CD8-positive, alpha-beta memory T cell (primary cell): ENCODE measurements at regions of chr17 and their contacts with region 1.

Region 1: GRCh38 chr17:80986816-80987475 is 4.7 kb upstream of the CHMP6 start:
- DNase-seq: no peak
- H3K4me3 ChIP-seq: no peak overlapping the region
- H3K4me3 Mint-ChIP-seq: no peak overlapping the region
- H3K27ac ChIP-seq: no peak overlapping the region
- H3K27ac Mint-ChIP-seq: peak overlapping the region in 1 of 8 donors; percentile 50
- H3K4me1 ChIP-seq: peaks cover 20% of the 10 kb centered on the region
- H3K4me1 Mint-ChIP-seq: peaks cover 7 to 23% (median 11%) of the 10 kb centered on the region in 3 donors
- H3K27me3 ChIP-seq: no peaks in the 10 kb centered on the region
- H3K27me3 Mint-ChIP-seq: peaks cover 4 to 8% of the 10 kb centered on the region in 2 donors

Region 2: GRCh38 chr17:80997424-80997841 is 10.5 kb after region 1 on chr17:
- CTCF ChIA-PET with region 1: no interaction called
- POLR2A ChIA-PET with region 1: no interaction called
- DNase-seq: no peak
- H3K4me3 ChIP-seq: no peak overlapping the region
- H3K4me3 Mint-ChIP-seq: peak overlapping the region in 1 of 7 donors; percentile 72
- H3K27ac ChIP-seq: no peak overlapping the region
- H3K27ac Mint-ChIP-seq: no peak overlapping the region
- H3K4me1 ChIP-seq: peaks cover 13% of the 10 kb centered on the region
- H3K4me1 Mint-ChIP-seq: peaks cover 14 to 21% (median 16%) of the 10 kb centered on the region in 3 donors
- H3K27me3 ChIP-seq: no peaks in the 10 kb centered on the region
- H3K27me3 Mint-ChIP-seq: no peaks in the 10 kb centered on the region

Region 3: GRCh38 chr17:81094509-81095382 is 107.8 kb after region 1 on chr17:
- CTCF ChIA-PET with region 1: interaction called, 15 read pairs
- POLR2A ChIA-PET with region 1: no interaction called
- DNase-seq: peak; percentile 75 to 96 (median 86)
- H3K4me3 ChIP-seq: peak overlapping the region; percentile 47
- H3K4me3 Mint-ChIP-seq: peak overlapping the region; percentile 45 to 88 (median 74)
- H3K27ac ChIP-seq: peak overlapping the region; percentile 76
- H3K27ac Mint-ChIP-seq: peak overlapping the region; percentile 79 to 98 (median 92)
- H3K4me1 ChIP-seq: peaks cover 51% of the 10 kb centered on the region
- H3K4me1 Mint-ChIP-seq: peaks cover 27 to 65% (median 42%) of the 10 kb centered on the region in 3 donors
- H3K27me3 ChIP-seq: no peaks in the 10 kb centered on the region
- H3K27me3 Mint-ChIP-seq: peaks cover 0 to 2% of the 10 kb centered on the region in 2 donors

Region 4: DNA sequence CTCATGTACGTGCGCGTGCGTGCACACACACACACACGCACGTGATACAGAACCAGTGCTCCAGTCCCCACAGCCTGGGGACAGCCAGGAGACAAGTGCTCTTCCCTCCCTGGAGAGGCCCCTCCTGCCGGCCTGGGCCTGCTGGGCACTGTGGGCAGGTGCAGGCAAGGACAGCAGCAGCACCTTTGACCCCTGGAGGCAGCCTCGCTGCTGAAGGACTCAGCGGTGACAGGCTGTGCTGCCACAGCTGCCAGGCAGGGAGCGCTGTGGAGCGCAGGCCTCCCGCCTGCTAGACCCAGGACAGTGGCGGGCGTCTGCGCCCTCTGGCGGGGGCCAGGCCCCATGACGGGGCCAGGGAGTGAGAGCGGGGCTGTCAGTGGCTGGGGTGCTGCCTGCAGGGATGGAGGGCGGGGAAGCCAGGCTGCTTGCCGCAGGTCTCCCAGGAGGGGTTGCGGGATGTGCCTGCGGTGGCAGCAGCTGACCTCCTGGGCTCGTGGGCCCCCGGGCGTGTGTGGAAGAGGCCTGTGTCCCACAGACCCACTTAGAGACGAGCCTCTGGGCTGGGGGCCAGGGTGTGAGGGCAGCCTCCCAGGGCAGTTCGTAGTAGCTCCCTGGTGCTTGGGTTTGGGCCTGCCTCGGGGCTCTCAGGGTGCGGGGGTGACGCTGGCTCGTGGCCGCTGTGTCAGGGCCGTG is 114.8 kb after region 1 on chr17:
- CTCF ChIA-PET with region 1: interaction called, 17 read pairs
- POLR2A ChIA-PET with region 1: no interaction called
- DNase-seq: peak; percentile 82 to 91 (median 85)
- H3K4me3 ChIP-seq: no peak overlapping the region
- H3K4me3 Mint-ChIP-seq: no peak overlapping the region
- H3K27ac ChIP-seq: no peak overlapping the region
- H3K27ac Mint-ChIP-seq: no peak overlapping the region
- H3K4me1 ChIP-seq: peaks cover 23% of the 10 kb centered on the region
- H3K4me1 Mint-ChIP-seq: peaks cover 3 to 19% (median 6%) of the 10 kb centered on the region in 3 donors
- H3K27me3 ChIP-seq: no peaks in the 10 kb centered on the region
- H3K27me3 Mint-ChIP-seq: peaks cover 0 to 1% of the 10 kb centered on the region in 2 donors